ENCODE measurements at regions of chr9 and their contacts with region 1.

Region 1: GRCh38 chr9:129610473-129611301 is 10.2 kb downstream of the C9orf50 start:
- DNase-seq: peak; percentile 80 to 85 (median 84)
- ATAC-seq: peak; percentile 73
- H3K4me3 ChIP-seq: peak overlapping the region; percentile 32
- H3K4me1 ChIP-seq: peaks cover 22% of the 10 kb centered on the region
- CTCF ChIP-seq: peak; percentile 95

Region 2: DNA sequence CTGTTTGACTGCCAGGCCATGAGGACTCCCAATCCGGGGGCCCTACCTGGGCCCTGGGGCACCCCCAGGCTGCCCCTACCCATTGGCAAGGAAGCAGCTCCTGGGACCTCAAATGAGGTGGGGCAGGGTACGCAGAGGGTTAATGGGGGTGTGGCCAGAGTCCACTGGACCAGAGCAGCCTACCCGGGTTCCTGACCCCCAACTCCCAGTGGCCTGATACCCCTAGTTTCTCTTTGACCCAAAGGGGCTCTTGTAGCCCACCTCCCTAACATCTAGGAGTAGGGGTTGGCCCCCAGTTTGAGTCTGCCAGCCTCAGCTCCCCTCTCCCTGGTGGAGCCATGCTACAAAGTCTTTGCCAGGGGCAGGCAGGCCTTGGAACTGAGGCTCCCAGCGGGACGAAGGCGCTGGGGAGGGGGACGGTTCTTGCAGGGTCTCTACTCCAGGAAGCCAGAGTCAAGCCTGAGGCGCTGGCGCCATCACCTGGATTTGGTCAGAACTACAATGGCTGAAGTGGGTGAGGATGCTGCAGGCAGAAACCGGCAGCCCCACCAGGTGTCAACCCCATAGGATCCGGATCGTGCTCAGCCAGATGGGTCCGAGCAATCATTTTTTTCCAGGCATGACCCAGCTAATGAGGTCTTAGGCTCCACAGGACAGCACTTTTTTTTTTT is 1198.4 kb before region 1 on chr9:
- intact Hi-C with region 1: no loop called
- DNase-seq: peak in 2 of 3 donors; percentile 45 to 50
- ATAC-seq: no peak
- H3K4me3 ChIP-seq: no peak overlapping the region
- H3K4me1 ChIP-seq: peaks cover 4% of the 10 kb centered on the region
- CTCF ChIP-seq: no peak

Region 3: GRCh38 chr9:129131300-129132145 is 479.2 kb before region 1 on chr9:
- intact Hi-C with region 1: loop called (anchors 5 kb)
- DNase-seq: peak; percentile 80 to 87 (median 85)
- ATAC-seq: peak; percentile 98
- H3K4me3 ChIP-seq: no peak overlapping the region
- H3K4me1 ChIP-seq: peaks cover 3% of the 10 kb centered on the region
- CTCF ChIP-seq: peak; percentile 99

Region 4: GRCh38 chr9:129139993-129140396 is 470.7 kb before region 1 on chr9:
- intact Hi-C with region 1: loop called in 1 of 2 experiments (anchors 5 kb)
- DNase-seq: peak; percentile 79 to 89 (median 89)
- ATAC-seq: peak; percentile 85
- H3K4me3 ChIP-seq: no peak overlapping the region
- H3K4me1 ChIP-seq: peaks cover 43% of the 10 kb centered on the region
- CTCF ChIP-seq: no peak

Region 5: DNA sequence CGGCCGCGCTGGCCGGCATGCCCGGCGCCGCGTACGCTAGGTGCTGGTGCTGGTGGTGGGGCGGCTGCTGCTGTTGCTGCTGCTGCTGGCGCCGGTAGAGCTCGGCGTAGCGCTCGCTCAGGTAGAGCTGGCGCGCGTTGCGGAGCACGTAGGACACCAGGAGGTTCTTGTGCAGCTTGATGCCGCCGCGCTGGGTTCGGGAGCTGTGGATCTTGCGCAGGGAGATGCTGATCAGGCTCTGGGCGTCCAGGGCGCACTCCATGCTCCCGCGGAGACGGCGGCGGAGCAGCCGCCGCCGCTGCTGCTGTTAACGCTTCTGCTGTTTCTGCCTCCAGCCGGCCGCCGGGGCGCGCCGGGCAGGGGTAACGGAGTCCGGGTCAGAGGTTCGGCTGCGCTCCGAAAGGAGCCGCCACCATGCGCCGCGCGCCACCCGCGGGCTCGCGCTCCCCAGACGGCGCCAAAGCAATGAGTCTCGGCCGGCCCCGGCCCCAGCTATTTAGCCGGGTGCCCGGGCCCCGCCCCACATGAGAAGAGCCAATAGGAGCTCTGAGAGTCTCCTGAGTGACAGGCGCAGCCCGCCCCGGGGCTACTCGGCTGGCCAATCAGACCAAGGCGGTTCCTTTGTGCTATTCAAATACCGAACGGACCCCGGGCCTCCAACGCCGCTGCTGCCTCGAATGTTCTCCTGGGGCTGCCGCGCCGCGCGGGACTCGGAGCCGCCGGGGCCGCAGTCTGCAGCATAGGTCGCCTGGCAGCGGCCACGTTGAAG is 432.7 kb before region 1 on chr9 and contains the start of gene IER5L:
- intact Hi-C with region 1: loop called in 1 of 2 experiments (anchors 5 kb)
- DNase-seq: peak; percentile 95 to 97 (median 96)
- ATAC-seq: peak; percentile 78
- H3K4me3 ChIP-seq: peak within 1 kb of the TSS; percentile 56
- H3K4me1 ChIP-seq: peaks cover 41% of the 10 kb centered on the region
- CTCF ChIP-seq: no peak
- total RNA-seq, gene IER5L: 5.8 to 8.2 (median 8.0) TPM

Region 6: GRCh38 chr9:129464911-129465833 is 145.5 kb before region 1 on chr9:
- intact Hi-C with region 1: no loop called
- DNase-seq: peak; percentile 35 to 50 (median 48)
- ATAC-seq: no peak
- H3K4me3 ChIP-seq: no peak overlapping the region
- H3K4me1 ChIP-seq: peaks cover 14% of the 10 kb centered on the region
- CTCF ChIP-seq: no peak

Region 7: GRCh38 chr9:129482521-129483414 is 127.9 kb before region 1 on chr9:
- intact Hi-C with region 1: loop called in 1 of 2 experiments (anchors 10 kb)
- DNase-seq: peak; percentile 81 to 92 (median 88)
- ATAC-seq: peak; percentile 80
- H3K4me3 ChIP-seq: peak overlapping the region; percentile 17
- H3K4me1 ChIP-seq: peaks cover 17% of the 10 kb centered on the region
- CTCF ChIP-seq: no peak

Measured in mucosa of descending colon (tissue), 3 donors.